ENCODE measurements at regions of chr22 and their contacts with region 1.

Region 1: DNA sequence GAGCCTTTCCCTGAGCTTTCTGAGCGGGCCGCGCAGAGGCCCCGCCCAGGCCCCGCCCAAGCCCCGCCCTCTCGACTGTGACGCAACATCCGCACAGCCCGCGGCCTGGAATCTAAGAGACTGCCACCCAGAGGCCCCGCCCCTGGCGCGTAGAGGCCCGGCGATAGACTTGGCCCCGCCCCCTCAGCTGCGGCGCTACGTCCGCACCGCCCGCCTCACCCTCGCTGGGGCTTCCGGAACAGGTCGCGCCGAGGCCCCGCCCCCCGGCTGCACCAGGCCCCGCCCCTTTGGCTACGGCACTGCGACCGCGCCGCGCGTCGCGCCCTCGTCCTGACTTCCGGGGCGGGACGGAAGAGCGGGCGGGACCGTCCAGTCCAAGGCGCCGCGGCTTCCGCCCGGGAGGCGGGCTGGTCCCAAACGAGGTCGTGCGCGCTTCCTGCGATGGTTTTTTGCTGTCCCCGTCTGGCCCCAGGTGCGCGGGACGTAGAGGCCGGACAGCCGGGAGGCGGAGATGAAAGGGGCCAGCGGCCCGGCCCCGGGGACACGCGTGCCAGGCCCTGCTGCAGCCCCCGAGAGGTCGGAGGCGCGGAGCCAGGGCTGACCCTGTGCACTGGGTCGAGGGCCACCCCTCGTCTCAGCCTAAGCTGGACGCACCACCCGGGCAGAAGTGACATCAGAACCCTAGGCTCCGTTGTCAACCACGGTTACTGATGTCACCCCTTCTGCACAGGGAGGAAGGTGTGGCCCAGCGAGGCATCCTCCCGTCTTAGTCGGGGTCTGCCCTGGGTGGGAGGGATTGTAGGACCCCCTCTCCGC is 59.0 kb upstream of the WNT7B start:
- DNase-seq: peak; percentile 95 to 100 (median 100)
- ATAC-seq: peak; percentile 86
- H3K4me3 Mint-ChIP-seq: peak overlapping the region; percentile 80 to 91 (median 84)
- H3K27ac Mint-ChIP-seq: peak overlapping the region; percentile 82 to 98 (median 96)
- H3K4me1 Mint-ChIP-seq: peaks cover 4 to 22% (median 14%) of the 10 kb centered on the region in 4 donors
- H3K27me3 Mint-ChIP-seq: no peaks in the 10 kb centered on the region

Region 2: GRCh38 chr22:45960477-45961386 is 75.2 kb before region 1 on chr22:
- POLR2A ChIA-PET with region 1: no interaction called
- DNase-seq: no peak
- ATAC-seq: no peak
- H3K4me3 Mint-ChIP-seq: no peak overlapping the region
- H3K27ac Mint-ChIP-seq: no peak overlapping the region
- H3K4me1 Mint-ChIP-seq: no peaks in the 10 kb centered on the region
- H3K27me3 Mint-ChIP-seq: peaks cover 0 to 10% (median 0%) of the 10 kb centered on the region in 5 donors

Region 3: DNA sequence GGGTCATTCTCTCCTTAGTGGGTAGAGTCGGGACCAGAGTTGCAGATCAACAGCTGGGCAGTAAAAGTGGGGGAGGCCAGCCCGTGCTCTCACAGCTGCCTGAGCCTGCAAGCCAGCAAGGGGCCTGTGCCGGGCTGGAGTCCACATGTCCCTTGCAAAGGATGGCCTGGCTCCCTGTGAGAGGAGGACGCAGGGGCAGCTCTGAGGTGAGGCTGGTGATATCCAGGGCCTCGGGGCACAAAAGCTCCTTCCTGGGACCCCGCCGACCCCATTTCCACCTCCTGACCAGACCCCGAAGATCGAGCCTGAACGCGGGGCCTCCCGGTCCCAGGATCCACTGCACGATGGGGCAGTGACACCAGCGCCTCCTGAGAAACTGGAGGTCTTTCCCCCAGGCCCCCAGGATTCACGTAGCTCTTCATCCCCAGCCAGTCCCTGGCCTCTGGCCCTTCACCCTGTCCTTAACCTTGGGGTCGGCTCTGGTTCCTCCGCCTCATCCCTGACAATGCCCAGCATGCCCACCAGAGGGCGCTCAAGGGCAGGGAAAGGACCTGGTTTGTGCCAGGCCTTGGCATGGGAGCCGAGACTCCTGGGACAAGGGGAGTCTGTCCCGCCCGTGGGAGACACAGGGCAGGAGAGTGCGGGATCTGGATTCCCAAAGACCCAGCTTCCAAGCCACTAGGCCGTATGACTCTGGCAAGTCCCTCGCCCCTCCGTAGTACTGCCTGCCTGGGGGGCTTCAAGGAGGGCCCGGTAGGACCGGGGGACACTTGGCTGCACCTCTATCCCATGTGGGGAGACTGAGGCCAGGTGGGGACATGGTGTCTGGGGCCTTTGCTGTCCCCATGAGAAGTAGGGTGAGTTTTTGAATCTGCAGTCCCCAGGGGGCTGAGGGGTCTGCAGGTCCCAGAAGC is 41.2 kb before region 1 on chr22:
- POLR2A ChIA-PET with region 1: interaction called, 13 read pairs
- DNase-seq: peak; percentile 55 to 86 (median 78)
- ATAC-seq: peak; percentile 75 to 87
- H3K4me3 Mint-ChIP-seq: peak overlapping the region in 2 of 10 donors; percentile 5 to 54
- H3K27ac Mint-ChIP-seq: peak overlapping the region in 2 of 10 donors; percentile 50 to 64
- H3K4me1 Mint-ChIP-seq: peaks cover 6 to 21% (median 10%) of the 10 kb centered on the region in 4 donors
- H3K27me3 Mint-ChIP-seq: peaks cover 0 to 3% (median 0%) of the 10 kb centered on the region in 5 donors

Region 4: GRCh38 chr22:46006379-46007002 is 29.5 kb before region 1 on chr22:
- POLR2A ChIA-PET with region 1: interaction called, 40 read pairs
- DNase-seq: peak; percentile 71 to 93 (median 84)
- ATAC-seq: peak; percentile 94 to 98
- H3K4me3 Mint-ChIP-seq: peak overlapping the region in 5 of 10 donors; percentile 19 to 64 (median 27)
- H3K27ac Mint-ChIP-seq: peak overlapping the region in 5 of 10 donors; percentile 8 to 83 (median 49)
- H3K4me1 Mint-ChIP-seq: peaks cover 5 to 17% (median 16%) of the 10 kb centered on the region in 4 donors
- H3K27me3 Mint-ChIP-seq: no peaks in the 10 kb centered on the region

Region 5: GRCh38 chr22:46013460-46014416 is 22.2 kb before region 1 on chr22:
- POLR2A ChIA-PET with region 1: interaction called, 89 read pairs
- DNase-seq: peak; percentile 62 to 90 (median 71)
- ATAC-seq: peak; percentile 86 to 92
- H3K4me3 Mint-ChIP-seq: peak overlapping the region; percentile 85 to 95 (median 88)
- H3K27ac Mint-ChIP-seq: peak overlapping the region; percentile 73 to 95 (median 86)
- H3K4me1 Mint-ChIP-seq: peaks cover 5 to 22% (median 8%) of the 10 kb centered on the region in 4 donors
- H3K27me3 Mint-ChIP-seq: no peaks in the 10 kb centered on the region

Region 6: GRCh38 chr22:46054091-46055073 is 18.4 kb after region 1 on chr22:
- POLR2A ChIA-PET with region 1: interaction called, 112 read pairs
- DNase-seq: peak in 8 of 10 donors; percentile 11 to 75 (median 46)
- ATAC-seq: peak; percentile 46 to 54
- H3K4me3 Mint-ChIP-seq: peak overlapping the region; percentile 78 to 94 (median 90)
- H3K27ac Mint-ChIP-seq: peak overlapping the region; percentile 91 to 99 (median 96)
- H3K4me1 Mint-ChIP-seq: peaks cover 17 to 81% (median 55%) of the 10 kb centered on the region in 4 donors
- H3K27me3 Mint-ChIP-seq: no peaks in the 10 kb centered on the region

Region 7: GRCh38 chr22:46071451-46072109 is 35.6 kb after region 1 on chr22:
- POLR2A ChIA-PET with region 1: interaction called, 16 read pairs
- DNase-seq: peak in 8 of 10 donors; percentile 33 to 80 (median 43)
- ATAC-seq: peak; percentile 33 to 34
- H3K4me3 Mint-ChIP-seq: peak overlapping the region; percentile 73 to 89 (median 82)
- H3K27ac Mint-ChIP-seq: peak overlapping the region in 3 of 10 donors; percentile 74 to 84 (median 77)
- H3K4me1 Mint-ChIP-seq: peaks cover 21 to 67% (median 56%) of the 10 kb centered on the region in 4 donors
- H3K27me3 Mint-ChIP-seq: no peaks in the 10 kb centered on the region

Region 8: GRCh38 chr22:46116491-46116958 is 80.6 kb after region 1 on chr22:
- POLR2A ChIA-PET with region 1: interaction called, 17 read pairs
- DNase-seq: peak; percentile 73 to 93 (median 83)
- ATAC-seq: peak; percentile 96 to 98
- H3K4me3 Mint-ChIP-seq: no peak overlapping the region
- H3K27ac Mint-ChIP-seq: peak overlapping the region in 1 of 10 donors; percentile 50
- H3K4me1 Mint-ChIP-seq: peaks cover 0 to 5% (median 2%) of the 10 kb centered on the region in 4 donors
- H3K27me3 Mint-ChIP-seq: no peaks in the 10 kb centered on the region

Region 9: DNA sequence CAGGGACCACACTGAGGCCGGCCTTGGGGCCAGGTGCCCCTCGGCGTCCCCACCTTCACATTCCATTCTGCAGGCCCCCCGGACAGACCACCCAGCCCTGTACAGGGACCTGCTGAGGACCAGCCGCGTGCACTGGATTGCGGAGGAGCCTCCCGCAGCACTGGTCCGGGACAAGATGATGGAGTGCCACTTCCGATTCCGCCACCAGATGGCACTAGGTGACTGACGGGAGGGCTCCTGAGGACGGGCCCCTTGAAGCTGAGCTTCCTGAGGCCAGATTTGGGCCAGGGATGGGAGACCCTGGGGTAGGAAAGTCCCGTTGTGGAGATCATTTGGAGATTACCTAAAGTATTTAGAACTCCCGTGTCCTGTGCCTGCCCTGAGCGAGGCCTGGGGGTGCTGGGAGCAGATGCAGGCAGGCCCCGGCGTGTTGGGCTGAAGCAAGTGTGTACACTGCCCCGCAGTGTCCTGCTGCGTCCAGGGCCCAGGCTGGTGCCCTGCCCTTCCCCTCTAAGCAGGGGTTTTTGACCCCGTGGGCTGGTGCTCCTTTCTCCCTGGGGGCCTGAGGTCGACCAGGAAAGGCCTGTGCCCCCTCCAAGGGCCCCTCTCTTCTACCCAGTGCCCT is 319.5 kb after region 1 on chr22:
- POLR2A ChIA-PET with region 1: no interaction called
- DNase-seq: peak; percentile 16 to 75 (median 49)
- ATAC-seq: peak; percentile 50 to 51
- H3K4me3 Mint-ChIP-seq: no peak overlapping the region
- H3K27ac Mint-ChIP-seq: peak overlapping the region in 4 of 10 donors; percentile 2 to 48 (median 38)
- H3K4me1 Mint-ChIP-seq: peaks cover 0 to 11% (median 2%) of the 10 kb centered on the region in 4 donors
- H3K27me3 Mint-ChIP-seq: no peaks in the 10 kb centered on the region

Measured in naive thymus-derived CD8-positive, alpha-beta T cell (primary cell).